ENCODE measurements at regions of chr22 and their contacts with region 1.

Region 1: GRCh38 chr22:32411829-32412592 is at the start of gene RTCB:
- DNase-seq: peak; percentile 87

Region 2: DNA sequence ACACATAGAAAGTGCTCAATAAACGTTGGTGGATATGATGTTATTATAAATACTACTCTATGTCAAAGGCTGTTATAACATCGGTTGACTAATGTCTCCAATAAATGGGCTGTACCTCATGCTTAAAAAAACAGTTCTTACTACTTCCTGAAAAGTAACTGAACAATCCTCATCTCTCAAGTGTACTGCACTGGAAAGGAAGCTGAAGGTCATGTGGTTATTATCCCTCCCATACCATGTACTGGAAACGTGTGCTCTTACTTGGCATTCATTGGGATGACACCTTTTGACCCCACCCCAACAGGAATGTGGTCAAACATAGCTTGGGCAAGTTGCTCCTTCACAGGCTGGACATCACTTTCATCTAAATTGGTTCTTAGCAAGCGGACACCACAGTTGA is 10.5 kb before region 1 on chr22:
- CTCF ChIA-PET with region 1: no interaction called
- POLR2A ChIA-PET with region 1: interaction called, 16 read pairs
- DNase-seq: no peak

Region 3: GRCh38 chr22:32469797-32470212 is 57.8 kb after region 1 on chr22:
- CTCF ChIA-PET with region 1: interaction called, 7 read pairs
- POLR2A ChIA-PET with region 1: interaction called, 16 read pairs
- DNase-seq: no peak

Region 4: GRCh38 chr22:32474635-32475467 is 62.8 kb after region 1 on chr22 and contains the start of gene FBXO7:
- CTCF ChIA-PET with region 1: interaction called, 7 read pairs
- POLR2A ChIA-PET with region 1: interaction called, 16 read pairs
- DNase-seq: peak; percentile 96

Measured in HEK293T (cell line).